ENCODE measurements at regions of chr4 and their contacts with region 1.

Region 1: DNA sequence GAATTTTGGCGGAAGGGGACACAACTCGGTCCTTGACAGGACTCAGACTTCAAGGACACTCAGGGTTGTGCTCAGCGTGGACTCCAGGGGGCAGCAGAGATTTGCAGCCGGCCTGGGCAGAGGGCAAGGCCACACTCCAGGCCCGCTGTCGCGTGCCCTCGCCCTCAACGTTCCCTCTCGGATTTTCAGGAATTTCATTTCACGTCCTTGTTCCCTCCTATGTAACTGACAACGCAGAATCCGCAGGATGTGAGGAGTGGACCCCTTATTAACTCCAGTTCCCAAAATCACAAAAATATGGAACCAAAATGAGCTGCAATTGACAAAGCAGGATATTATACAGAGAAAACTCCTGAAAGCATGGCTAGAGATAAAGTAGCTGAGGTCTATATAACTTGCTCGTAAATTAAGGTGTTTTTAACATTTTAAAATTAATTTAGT is 21.0 kb upstream of the DCTD start:
- DNase-seq: peak; percentile 81
- H3K4me3 Mint-ChIP-seq: no peak overlapping the region
- H3K27ac Mint-ChIP-seq: no peak overlapping the region
- H3K4me1 Mint-ChIP-seq: no peaks in the 10 kb centered on the region
- H3K27me3 Mint-ChIP-seq: peaks cover 15% of the 10 kb centered on the region

Region 2: GRCh38 chr4:182925298-182925738 is 12.9 kb before region 1 on chr4:
- CTCF ChIA-PET with region 1: interaction called, 53 read pairs
- POLR2A ChIA-PET with region 1: no interaction called
- intact Hi-C with region 1: no loop called
- DNase-seq: peak; percentile 70
- H3K4me3 Mint-ChIP-seq: no peak overlapping the region
- H3K27ac Mint-ChIP-seq: no peak overlapping the region
- H3K4me1 Mint-ChIP-seq: no peaks in the 10 kb centered on the region
- H3K27me3 Mint-ChIP-seq: peaks cover 4% of the 10 kb centered on the region

Region 3: GRCh38 chr4:182955411-182955810 is 17.2 kb after region 1 on chr4:
- CTCF ChIA-PET with region 1: interaction called, 14 read pairs
- POLR2A ChIA-PET with region 1: no interaction called
- intact Hi-C with region 1: no loop called
- DNase-seq: no peak
- H3K4me3 Mint-ChIP-seq: no peak overlapping the region
- H3K27ac Mint-ChIP-seq: no peak overlapping the region
- H3K4me1 Mint-ChIP-seq: no peaks in the 10 kb centered on the region
- H3K27me3 Mint-ChIP-seq: peaks cover 5% of the 10 kb centered on the region

Region 4: DNA sequence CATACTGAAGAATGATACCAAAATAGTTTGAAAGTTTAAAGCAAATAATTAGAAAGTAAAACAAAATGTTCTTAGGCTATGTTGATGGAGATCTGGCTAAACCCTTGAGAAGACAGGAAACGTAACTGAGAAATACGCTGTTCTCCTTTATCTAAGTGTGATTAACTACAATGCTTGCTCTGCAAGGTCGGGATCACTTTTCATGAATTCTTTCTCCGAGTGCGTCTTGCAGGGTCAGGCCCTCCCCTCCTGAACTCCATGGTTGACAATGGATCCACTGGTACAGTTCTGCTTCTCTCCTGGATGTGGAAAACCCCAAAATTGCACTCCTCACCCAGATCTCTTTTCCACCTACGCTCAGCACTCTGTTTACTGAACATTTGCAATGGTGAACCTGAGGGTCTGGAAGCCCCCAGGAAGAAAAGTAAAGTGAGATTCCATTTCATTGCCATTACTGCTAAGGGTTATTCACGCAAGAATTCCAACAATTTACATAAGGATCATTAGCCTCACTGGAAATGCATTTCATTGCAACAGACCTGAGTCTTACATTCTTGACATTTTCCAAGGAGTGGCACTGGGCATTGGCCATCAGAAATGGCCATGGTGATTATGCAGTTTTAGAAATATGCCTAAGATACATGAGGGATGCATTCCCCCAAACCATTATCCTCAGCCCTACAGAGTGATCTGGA is 136.2 kb after region 1 on chr4:
- CTCF ChIA-PET with region 1: interaction called, 22 read pairs
- POLR2A ChIA-PET with region 1: no interaction called
- intact Hi-C with region 1: loop called (anchors 1 kb)
- DNase-seq: no peak
- H3K4me3 Mint-ChIP-seq: no peak overlapping the region
- H3K27ac Mint-ChIP-seq: no peak overlapping the region
- H3K4me1 Mint-ChIP-seq: no peaks in the 10 kb centered on the region
- H3K27me3 Mint-ChIP-seq: no peaks in the 10 kb centered on the region

Region 5: DNA sequence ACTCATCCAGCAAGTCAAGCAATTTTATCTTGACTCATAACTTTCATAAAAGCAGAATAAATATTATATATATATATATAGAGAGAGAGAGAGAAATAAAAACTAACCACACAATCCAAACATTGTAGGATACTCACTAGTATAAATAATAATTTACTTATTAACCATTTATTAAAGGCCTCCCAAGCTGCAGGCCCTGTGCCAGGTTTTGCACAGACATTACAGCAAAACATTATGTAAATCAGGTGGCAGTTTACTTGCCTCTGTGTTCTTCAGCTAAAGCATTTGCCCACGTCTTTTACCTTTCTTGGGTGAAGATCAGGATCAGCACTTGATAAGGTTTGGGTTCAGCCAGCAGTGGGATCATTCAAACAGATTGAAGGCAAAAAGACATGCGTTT is 306.3 kb after region 1 on chr4:
- CTCF ChIA-PET with region 1: interaction called, 68 read pairs
- POLR2A ChIA-PET with region 1: no interaction called
- intact Hi-C with region 1: no loop called
- DNase-seq: no peak
- H3K4me3 Mint-ChIP-seq: no peak overlapping the region
- H3K27ac Mint-ChIP-seq: no peak overlapping the region
- H3K4me1 Mint-ChIP-seq: no peaks in the 10 kb centered on the region
- H3K27me3 Mint-ChIP-seq: no peaks in the 10 kb centered on the region

Region 6: GRCh38 chr4:183249857-183250256 is 311.6 kb after region 1 on chr4:
- CTCF ChIA-PET with region 1: interaction called, 68 read pairs
- POLR2A ChIA-PET with region 1: no interaction called
- intact Hi-C with region 1: no loop called
- DNase-seq: peak; percentile 23
- H3K4me3 Mint-ChIP-seq: no peak overlapping the region
- H3K27ac Mint-ChIP-seq: no peak overlapping the region
- H3K4me1 Mint-ChIP-seq: no peaks in the 10 kb centered on the region
- H3K27me3 Mint-ChIP-seq: no peaks in the 10 kb centered on the region

Region 7: GRCh38 chr4:183256756-183257385 is 318.6 kb after region 1 on chr4:
- CTCF ChIA-PET with region 1: interaction called, 117 read pairs
- POLR2A ChIA-PET with region 1: no interaction called
- intact Hi-C with region 1: loop called (anchors 1 kb)
- DNase-seq: peak; percentile 54
- H3K4me3 Mint-ChIP-seq: no peak overlapping the region
- H3K27ac Mint-ChIP-seq: no peak overlapping the region
- H3K4me1 Mint-ChIP-seq: no peaks in the 10 kb centered on the region
- H3K27me3 Mint-ChIP-seq: no peaks in the 10 kb centered on the region